K562 (cell line): ENCODE measurements at regions of chr17 and their contacts with region 1.

Region 1: DNA sequence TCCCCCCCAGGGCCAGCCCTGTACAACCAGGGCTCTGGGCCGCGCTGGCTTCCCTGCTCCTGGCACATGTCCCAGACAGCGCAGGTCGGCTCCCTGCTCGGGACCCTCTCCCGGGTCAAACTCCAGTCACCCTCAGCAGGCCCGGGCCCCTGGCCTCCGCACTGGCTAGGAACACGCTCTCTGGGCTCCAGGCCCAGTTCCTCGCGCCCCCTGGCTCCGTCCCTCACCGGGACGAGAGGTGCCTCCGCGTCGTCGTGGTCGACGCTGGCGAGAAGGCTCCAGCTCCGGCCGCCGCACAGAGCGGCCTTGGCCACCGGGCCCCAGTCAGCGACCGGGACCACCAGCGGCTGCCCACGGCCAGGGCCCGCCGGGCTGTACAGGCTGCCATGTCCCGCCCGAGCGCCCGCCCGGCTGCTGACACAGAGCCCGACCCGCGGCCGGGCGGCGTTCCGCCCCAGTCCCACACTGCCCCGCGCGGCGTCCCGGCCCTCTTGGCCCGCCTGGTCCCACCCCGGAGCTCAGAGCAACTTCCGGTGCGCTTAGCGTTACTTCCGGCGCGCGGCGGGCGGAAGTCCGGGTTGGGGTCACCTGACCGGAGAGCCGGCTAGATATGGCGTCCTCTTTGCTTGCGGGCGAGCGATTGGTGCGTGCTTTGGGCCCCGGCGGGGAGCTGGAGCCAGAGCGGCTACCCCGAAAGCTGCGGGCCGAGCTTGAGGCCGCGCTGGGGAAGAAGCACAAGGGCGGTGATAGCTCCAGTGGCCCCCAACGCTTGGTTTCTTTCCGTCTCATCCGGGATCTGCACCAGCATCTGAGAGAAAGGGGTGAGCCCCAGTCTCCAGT is at the start of gene POLDIP2:
- DNase-seq: peak; percentile 94 to 96 (median 94)
- ATAC-seq: peak; percentile 100
- H3K4me3 ChIP-seq: peak within 1 kb of the TSS; percentile 99
- H3K27ac ChIP-seq: peak within 1 kb of the TSS; percentile 89
- H3K4me1 ChIP-seq: peaks cover 5 to 10% of the 10 kb centered on the region in 2 experiments; a peak in 3 of 5 replicates
- H3K27me3 ChIP-seq: no peaks in the 10 kb centered on the region
- CTCF ChIP-seq: no peak
- EP300 ChIP-seq: peak; percentile 23
- POLR2A ChIP-seq: peak; percentile 88
- RAD21 ChIP-seq: no peak
- polyA plus RNA-seq, gene POLDIP2: 22.0 to 25.1 TPM

Region 2: DNA sequence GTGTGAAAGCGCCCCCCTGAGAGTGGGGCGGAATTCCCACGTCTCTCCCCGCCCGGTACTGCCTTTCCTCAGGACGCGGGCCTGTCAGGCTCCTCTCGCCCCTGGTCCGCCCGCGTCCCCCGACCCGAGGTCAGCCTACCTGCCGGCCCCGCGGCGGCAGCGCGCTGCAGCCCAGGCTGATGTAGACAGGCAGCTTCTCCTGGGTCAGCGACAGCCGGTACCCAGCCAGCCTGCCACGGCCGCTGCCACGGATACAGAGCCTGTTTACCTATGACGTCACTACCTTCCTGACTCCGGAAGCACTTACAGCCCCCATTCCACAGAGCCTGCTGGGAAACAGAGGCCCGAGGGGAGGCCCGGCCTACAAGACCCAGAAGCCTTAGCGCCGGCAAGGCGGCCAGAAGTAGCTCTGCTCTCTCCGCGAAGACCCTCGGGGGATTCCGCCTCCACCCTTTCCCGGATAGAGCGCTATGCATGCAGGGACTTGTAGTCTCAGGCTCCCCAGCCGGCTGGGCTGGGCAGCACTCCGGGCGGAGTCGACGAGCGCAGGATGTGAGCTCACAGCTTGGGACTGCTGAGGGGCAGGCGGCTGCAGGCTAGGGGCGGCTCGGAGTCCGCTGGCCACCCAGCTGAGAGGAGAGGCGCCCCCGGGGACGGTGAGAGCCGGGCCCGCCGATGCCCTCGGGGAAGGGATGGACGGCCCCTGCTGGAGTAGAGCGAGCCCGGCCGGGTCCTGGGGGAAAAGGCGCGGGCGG is 21.9 kb before region 1 on chr17 and contains the starts of genes IFT20 and TNFAIP1:
- CTCF ChIA-PET with region 1: no interaction called
- POLR2A ChIA-PET with region 1: interaction called, 23 read pairs
- in situ Hi-C with region 1: no loop called
- intact Hi-C with region 1: no loop called
- DNase-seq: peak; percentile 91 to 99 (median 94)
- ATAC-seq: peak; percentile 98
- H3K4me3 ChIP-seq: peak within 1 kb of the TSS; percentile 95
- H3K27ac ChIP-seq: peak within 1 kb of the TSS; percentile 65
- H3K4me1 ChIP-seq: peaks cover 19 to 20% of the 10 kb centered on the region in 2 experiments; a peak in 4 of 5 replicates
- H3K27me3 ChIP-seq: no peaks in the 10 kb centered on the region
- CTCF ChIP-seq: no peak
- EP300 ChIP-seq: peak; percentile 32; the same call in 1 of the 2 replicates
- POLR2A ChIP-seq: peak; percentile 79
- RAD21 ChIP-seq: peak in 1 of 2 experiments; percentile 16; a peak in 1 of 4 replicates
- polyA plus RNA-seq, gene IFT20: 11.2 to 17.7 TPM
- polyA plus RNA-seq, gene TNFAIP1: 2.1 to 2.9 TPM

Region 3: DNA sequence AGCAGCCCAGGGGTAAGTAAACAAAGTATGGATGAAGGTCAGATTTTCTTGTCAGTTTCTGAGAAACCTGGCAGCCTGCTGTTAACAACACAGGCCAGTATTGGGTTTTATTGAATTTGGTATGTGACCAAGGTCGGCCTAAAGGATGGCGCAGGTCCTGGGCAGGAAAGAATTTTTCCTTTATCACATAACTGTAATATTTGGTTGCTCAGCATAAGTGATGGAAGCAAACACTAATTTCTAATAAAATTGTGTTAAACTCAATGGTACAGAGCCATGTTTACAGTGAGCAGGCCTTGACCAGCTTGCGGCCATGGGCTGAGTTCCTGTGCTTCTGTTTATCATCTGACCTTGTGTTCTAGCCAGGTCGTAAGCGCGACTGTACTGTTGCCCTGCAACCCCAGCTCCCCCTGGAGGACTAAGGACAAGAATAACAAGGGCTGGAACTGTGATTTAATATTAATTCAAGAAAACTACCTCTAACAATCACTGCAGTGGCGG is 10.5 kb before region 1 on chr17:
- CTCF ChIA-PET with region 1: no interaction called
- POLR2A ChIA-PET with region 1: interaction called, 30 read pairs
- in situ Hi-C with region 1: no loop called
- intact Hi-C with region 1: no loop called
- DNase-seq: peak; percentile 32 to 57 (median 40)
- ATAC-seq: peak; percentile 73
- H3K4me3 ChIP-seq: no peak overlapping the region
- H3K27ac ChIP-seq: no peak overlapping the region
- H3K4me1 ChIP-seq: peaks cover 0 to 3% of the 10 kb centered on the region in 2 experiments; a peak in 1 of 5 replicates
- H3K27me3 ChIP-seq: no peaks in the 10 kb centered on the region
- CTCF ChIP-seq: peak; percentile 59 to 70 (median 65)
- EP300 ChIP-seq: no peak
- POLR2A ChIP-seq: no peak
- RAD21 ChIP-seq: peak; percentile 37 to 69

Region 4: GRCh38 chr17:28370038-28370743 is 12.9 kb after region 1 on chr17 and contains the start of gene VTN:
- CTCF ChIA-PET with region 1: no interaction called
- POLR2A ChIA-PET with region 1: interaction called, 31 read pairs
- in situ Hi-C with region 1: no loop called
- intact Hi-C with region 1: no loop called
- DNase-seq: peak; percentile 64 to 81 (median 68)
- ATAC-seq: peak; percentile 34
- H3K4me3 ChIP-seq: peak within 1 kb of the TSS; percentile 29; the same call in 1 of the 2 replicates
- H3K27ac ChIP-seq: no peak within 1 kb of the TSS
- H3K4me1 ChIP-seq: peaks cover 16 to 38% of the 10 kb centered on the region in 2 experiments
- H3K27me3 ChIP-seq: peaks cover 0 to 4% of the 10 kb centered on the region in 2 experiments; a peak in 1 of 5 replicates
- CTCF ChIP-seq: peak; percentile 12 to 44 (median 21); a peak in 3 of 6 replicates
- EP300 ChIP-seq: no peak
- POLR2A ChIP-seq: no peak
- RAD21 ChIP-seq: peak in 1 of 2 experiments; percentile 29; a peak in 2 of 4 replicates
- polyA plus RNA-seq, gene VTN: 0.22 to 1.0 TPM